Activated B cell treated with CpG ODN at 0.5 μM for 24 hours (primary cell): ENCODE measurements at regions of chr15 and their contacts with region 1.

Region 1: GRCh38 chr15:74433592-74434262 is at the start of gene SEMA7A:
- DNase-seq: peak; percentile 83
- ATAC-seq: peak; percentile 80
- H3K4me3 Mint-ChIP-seq: peak within 1 kb of the TSS; percentile 96
- H3K27ac Mint-ChIP-seq: peak within 1 kb of the TSS; percentile 90
- H3K4me1 Mint-ChIP-seq: peaks cover 76% of the 10 kb centered on the region
- H3K27me3 Mint-ChIP-seq: no peaks in the 10 kb centered on the region
- CTCF ChIP-seq: no peak
- total RNA-seq, gene SEMA7A: 159 and 178 TPM in 2 replicates

Region 2: GRCh38 chr15:74396445-74397238 is 37.1 kb before region 1 on chr15:
- CTCF ChIA-PET with region 1: interaction called, 6 read pairs
- POLR2A ChIA-PET with region 1: interaction called, 29 read pairs
- intact Hi-C with region 1: loop called (anchors 1 kb)
- DNase-seq: peak; percentile 72
- ATAC-seq: peak; percentile 66
- H3K4me3 Mint-ChIP-seq: peak overlapping the region; percentile 80
- H3K27ac Mint-ChIP-seq: peak overlapping the region; percentile 99
- H3K4me1 Mint-ChIP-seq: peaks cover 100% of the 10 kb centered on the region
- H3K27me3 Mint-ChIP-seq: no peaks in the 10 kb centered on the region
- CTCF ChIP-seq: no peak

Region 3: DNA sequence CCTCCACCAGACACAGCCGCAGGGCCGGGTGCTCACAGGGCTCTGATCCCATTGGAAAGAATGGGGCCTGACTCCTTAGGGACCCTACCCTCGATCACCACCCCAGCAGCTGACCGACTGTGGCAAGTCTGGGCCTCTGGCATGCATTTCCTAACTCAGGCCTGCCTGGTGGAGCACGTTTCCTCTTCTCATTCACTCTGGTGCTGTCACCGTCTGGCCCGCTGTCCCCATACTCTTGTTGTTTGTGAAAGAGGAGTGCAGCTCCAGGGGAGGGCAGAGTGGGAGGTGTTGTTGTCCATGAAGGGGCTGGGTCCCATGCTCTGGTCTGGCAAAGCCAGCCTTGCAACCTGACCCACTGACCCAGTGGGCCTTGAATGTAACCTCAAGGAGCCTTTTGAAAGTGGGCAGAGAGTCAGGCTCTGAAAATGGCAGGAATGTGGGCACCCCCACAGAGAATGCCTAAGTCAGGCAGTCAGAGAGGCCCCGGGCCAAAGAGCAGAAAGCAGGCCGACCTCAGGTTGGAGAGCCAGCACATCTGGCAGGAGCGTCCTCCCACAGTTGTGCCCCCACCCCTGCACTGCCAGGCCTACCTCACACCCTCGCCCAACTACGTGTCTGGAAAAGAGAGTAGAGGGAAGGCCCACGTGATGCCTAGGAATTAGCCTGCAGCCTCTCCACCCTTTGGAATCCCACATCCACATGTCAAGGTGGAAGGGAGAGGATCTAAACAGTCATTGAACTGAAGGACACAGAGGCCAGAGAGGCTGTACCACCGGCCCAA is 10.9 kb before region 1 on chr15:
- CTCF ChIA-PET with region 1: interaction called, 3 read pairs
- POLR2A ChIA-PET with region 1: interaction called, 10 read pairs
- intact Hi-C with region 1: loop called (anchors 1 kb)
- DNase-seq: no peak
- ATAC-seq: peak; percentile 32
- H3K4me3 Mint-ChIP-seq: peak overlapping the region; percentile 59
- H3K27ac Mint-ChIP-seq: peak overlapping the region; percentile 64
- H3K4me1 Mint-ChIP-seq: peaks cover 95% of the 10 kb centered on the region
- H3K27me3 Mint-ChIP-seq: no peaks in the 10 kb centered on the region
- CTCF ChIP-seq: no peak

Region 4: DNA sequence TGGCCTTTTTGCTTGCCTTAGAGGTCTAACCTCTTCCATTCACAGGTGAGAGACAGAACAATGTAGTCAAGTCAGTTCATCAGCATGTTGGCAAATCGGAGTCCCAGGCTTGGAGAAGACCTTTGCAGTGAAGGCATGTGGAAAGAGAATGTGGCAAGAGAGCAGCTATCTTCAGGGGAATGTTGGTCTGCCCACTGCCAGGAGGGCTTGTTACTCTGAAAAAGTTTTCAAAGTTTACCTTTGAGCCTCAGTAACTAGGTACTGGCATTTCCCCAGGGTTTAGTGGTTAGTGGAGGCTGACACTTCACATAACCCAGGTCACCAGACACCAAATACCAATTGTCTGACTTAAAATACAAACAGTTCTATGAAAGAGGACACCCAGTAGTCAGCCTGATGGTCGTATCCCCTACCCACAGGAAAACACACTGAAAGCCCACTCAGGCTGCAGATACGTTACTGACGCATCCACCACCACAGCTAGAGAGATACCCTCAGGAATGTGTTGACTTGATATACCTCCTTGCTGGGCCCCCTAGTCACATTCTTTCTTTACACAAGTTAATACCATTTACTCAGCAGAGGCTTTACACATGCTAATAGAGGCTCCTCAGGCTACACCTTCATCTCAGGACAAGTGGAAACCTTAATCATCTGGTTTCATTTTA is 97.6 kb after region 1 on chr15:
- CTCF ChIA-PET with region 1: no interaction called
- POLR2A ChIA-PET with region 1: no interaction called
- intact Hi-C with region 1: no loop called
- DNase-seq: no peak
- ATAC-seq: no peak
- H3K4me3 Mint-ChIP-seq: no peak overlapping the region
- H3K27ac Mint-ChIP-seq: no peak overlapping the region
- H3K4me1 Mint-ChIP-seq: no peaks in the 10 kb centered on the region
- H3K27me3 Mint-ChIP-seq: no peaks in the 10 kb centered on the region
- CTCF ChIP-seq: no peak

Region 5: DNA sequence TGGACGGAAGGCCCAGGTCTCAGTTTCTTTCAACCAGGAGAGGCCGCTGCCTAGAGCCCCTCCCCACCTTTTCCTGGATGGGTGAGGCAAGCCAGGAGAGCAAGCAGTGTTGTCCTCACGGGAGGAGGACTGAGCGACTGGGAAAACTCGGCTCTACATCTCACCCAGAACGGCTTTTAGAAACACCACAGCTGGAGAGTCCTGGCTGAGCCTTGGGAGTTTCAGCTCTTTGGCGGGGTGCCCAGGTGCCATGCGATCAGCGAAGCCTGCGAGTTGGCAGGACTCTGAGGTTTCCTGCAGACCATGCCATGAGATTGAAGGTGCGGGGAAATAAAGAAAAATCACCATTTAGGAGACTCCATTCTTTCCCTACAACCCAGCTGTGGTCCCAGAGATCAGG is 615.7 kb after region 1 on chr15:
- CTCF ChIA-PET with region 1: no interaction called
- POLR2A ChIA-PET with region 1: no interaction called
- intact Hi-C with region 1: no loop called
- DNase-seq: no peak
- ATAC-seq: no peak
- H3K4me3 Mint-ChIP-seq: no peak overlapping the region
- H3K27ac Mint-ChIP-seq: no peak overlapping the region
- H3K4me1 Mint-ChIP-seq: peaks cover 34% of the 10 kb centered on the region
- H3K27me3 Mint-ChIP-seq: no peaks in the 10 kb centered on the region
- CTCF ChIP-seq: no peak